ENCODE measurements at regions of chr2 and their contacts with region 1.

Region 1: DNA sequence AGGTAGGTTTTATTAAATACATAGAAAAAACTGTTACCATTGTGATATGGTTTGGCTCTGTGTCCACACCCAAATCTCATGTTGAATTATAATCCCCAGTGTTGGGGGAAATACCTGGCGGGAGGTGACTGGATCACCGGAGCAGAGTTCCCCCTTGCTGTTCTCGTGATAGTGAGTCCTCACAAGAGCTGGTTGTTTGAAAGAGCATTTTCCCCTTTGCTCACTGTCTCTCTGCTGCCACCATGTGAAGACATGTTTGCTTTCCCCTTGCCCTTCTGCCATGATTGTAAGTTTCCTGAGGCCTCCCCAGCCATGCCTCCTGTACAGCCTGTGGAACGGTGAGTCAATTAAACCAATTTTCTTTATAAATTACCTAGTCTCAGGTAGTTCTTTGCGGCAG is 352.7 kb upstream of the SLC39A10 start:
- DNase-seq: no peak
- H3K4me3 ChIP-seq: no peak overlapping the region
- H3K27ac ChIP-seq: no peak overlapping the region
- H3K4me1 ChIP-seq: no peaks in the 10 kb centered on the region
- H3K27me3 ChIP-seq: no peaks in the 10 kb centered on the region
- CTCF ChIP-seq: no peak

Region 2: DNA sequence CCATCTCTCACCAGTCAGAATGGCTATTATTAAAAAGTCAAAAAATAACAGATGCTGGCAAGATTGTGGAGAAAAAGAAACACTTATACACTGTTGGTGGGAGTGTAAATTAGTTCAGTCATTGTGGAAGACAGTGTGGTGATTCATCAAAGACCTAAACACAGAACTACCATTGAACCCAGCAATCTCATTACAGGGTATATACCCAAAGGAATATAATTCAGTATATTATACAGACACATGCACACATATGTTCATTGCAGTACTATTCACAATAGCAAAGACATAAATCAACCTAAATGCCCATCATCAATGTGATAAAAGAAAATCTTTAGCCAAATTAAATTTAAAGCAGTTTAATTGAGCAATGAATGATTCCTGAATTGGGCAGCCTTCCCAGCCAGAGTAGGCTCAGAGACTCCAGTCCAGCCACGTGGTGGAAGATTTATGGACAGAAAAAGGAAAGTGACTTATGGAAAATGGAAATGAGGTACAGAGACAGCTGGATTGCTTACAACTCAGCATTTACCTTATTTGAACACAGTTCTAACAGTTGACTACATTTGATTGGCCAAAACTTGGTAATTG is 24.4 kb before region 1 on chr2:
- CTCF ChIA-PET with region 1: no interaction called
- POLR2A ChIA-PET with region 1: no interaction called
- intact Hi-C with region 1: no loop called
- DNase-seq: no peak
- H3K4me3 ChIP-seq: no peak overlapping the region
- H3K27ac ChIP-seq: no peak overlapping the region
- H3K4me1 ChIP-seq: no peaks in the 10 kb centered on the region
- H3K27me3 ChIP-seq: no peaks in the 10 kb centered on the region
- CTCF ChIP-seq: no peak

Region 3: GRCh38 chr2:195343942-195344530 is 39.7 kb after region 1 on chr2:
- CTCF ChIA-PET with region 1: no interaction called
- POLR2A ChIA-PET with region 1: interaction called, 13 read pairs
- intact Hi-C with region 1: no loop called
- DNase-seq: no peak
- H3K4me3 ChIP-seq: no peak overlapping the region
- H3K27ac ChIP-seq: no peak overlapping the region
- H3K4me1 ChIP-seq: no peaks in the 10 kb centered on the region
- H3K27me3 ChIP-seq: no peaks in the 10 kb centered on the region
- CTCF ChIP-seq: no peak

Measured in PC-9 (cell line).